GM13977 (cell line): ENCODE measurements at regions of chr5 and their contacts with region 1.

Region 1: GRCh38 chr5:39599721-39600431 is 175.1 kb upstream of the DAB2 start:
- DNase-seq: no peak
- CTCF ChIP-seq: peak; percentile 46

Region 2: DNA sequence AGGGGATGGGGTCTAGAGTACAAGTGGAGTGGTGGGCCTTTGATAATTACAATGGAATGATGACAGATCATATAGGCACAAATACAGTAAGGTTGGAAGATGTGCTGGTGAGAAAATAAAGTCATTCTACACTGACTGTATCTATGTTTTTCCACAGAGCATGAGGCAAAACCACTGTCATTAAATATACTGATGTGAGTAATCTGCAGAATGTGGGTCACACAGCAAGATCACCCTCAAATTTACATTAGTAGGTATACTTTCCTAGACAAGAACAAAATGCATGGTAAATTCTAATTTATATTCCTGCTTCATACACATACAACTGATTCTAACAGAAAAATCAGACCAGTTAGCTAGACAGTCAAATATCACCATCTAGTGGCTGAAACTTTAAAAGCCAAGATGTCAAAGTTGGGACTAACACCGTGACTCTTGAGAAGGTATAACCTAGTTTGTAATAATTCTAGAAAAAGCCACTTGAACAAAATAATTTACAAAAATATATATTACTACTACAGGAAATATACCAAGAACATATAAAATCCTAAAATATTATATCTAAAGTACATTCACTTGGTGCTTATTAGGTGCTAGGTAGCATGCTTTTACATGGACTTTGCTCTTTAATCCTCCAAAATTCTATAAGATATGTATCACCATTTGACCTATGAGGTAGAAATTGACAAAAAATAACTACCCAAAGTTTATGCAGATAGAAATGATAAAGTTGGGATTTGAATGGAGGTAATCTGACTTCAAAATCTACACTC is 1136.4 kb after region 1 on chr5:
- in situ Hi-C with region 1: loop called (anchors 25 kb)
- DNase-seq: peak; percentile 48
- CTCF ChIP-seq: peak; percentile 75

Region 3: GRCh38 chr5:40879163-40879942 is 1279.5 kb after region 1 on chr5:
- in situ Hi-C with region 1: loop called (anchors 25 kb)
- DNase-seq: peak; percentile 32
- CTCF ChIP-seq: peak; percentile 39